Vagina (tissue), 2 donors: ENCODE measurements at regions of chr17 and their contacts with region 1.

Region 1: DNA sequence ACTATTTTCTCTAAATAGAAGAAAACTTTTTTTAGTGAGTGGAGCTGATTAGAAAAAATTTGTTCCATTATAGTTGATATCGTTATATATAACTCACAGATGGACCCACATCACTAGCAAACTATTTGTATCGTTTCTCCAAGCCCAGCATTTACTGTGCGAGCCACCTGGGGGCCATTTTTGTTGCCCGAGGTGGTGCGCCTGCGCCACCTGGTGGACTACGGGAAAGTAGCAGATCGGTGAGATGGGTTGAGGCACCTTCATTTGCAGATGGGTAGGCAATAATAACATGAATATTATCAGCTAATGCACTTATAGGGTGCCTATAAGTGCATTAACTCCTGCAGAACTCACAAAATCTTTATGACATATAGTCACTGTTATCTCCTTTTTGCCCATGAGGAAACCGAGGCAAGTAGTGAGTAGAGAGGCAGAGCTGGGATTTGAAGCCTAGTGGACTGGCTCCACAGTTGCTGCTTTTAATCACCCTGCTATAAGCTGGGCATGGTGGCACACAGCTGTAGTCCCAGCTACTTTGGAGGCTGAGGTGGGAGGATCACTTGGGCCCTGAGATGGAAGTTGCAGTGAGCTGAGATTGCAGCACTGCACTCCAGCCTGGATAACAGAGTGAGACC is 23.2 kb upstream of the NTN1 start:
- DNase-seq: no peak
- H3K4me3 ChIP-seq: no peak overlapping the region
- H3K27ac ChIP-seq: no peak overlapping the region
- H3K4me1 ChIP-seq: peaks cover 9% of the 10 kb centered on the region
- H3K27me3 ChIP-seq: no peaks in the 10 kb centered on the region
- CTCF ChIP-seq: peak in 2 of 3 experiments; percentile 58 to 64
- POLR2A ChIP-seq: no peak

Region 2: DNA sequence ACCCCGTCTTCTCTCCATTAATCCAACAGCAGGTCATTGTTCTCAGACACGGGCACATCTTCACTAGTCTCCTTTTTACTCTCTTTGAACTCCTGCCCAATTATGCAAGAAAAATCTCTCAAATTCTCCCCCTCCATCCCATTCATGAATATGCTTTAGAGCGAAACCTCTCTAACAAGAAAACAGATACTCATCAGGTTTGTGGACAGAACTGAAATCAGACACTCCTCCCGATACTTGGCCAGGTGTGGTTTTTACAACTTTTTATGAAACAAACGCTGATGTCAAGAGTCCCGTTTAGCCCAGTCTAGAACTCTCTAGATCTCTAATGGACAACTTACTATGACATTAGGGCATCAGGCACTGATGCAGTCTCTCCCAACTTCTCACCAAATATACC is 73.5 kb before region 1 on chr17:
- intact Hi-C with region 1: no loop called
- DNase-seq: no peak
- H3K4me3 ChIP-seq: no peak overlapping the region
- H3K27ac ChIP-seq: no peak overlapping the region
- H3K4me1 ChIP-seq: no peaks in the 10 kb centered on the region
- H3K27me3 ChIP-seq: no peaks in the 10 kb centered on the region
- CTCF ChIP-seq: no peak
- POLR2A ChIP-seq: no peak

Region 3: DNA sequence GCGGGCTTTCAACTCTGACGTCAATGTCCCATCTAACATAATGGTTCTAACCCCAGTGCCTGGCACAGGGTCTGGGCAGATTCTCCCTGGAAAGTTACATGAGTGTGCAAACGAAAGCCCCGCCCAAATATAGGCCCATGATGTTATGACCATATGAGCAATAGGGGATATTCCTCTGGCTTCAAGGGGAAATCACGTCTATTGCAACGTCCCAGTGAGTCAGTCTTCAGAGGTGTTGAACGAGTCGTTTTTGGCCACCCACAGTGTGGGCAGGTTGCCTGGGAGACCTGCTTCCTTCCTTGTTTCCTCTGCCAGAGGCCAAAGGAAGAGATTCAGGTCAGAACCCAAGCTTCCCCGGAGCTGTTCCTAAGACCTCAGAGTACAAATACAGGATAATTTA is 62.9 kb before region 1 on chr17:
- intact Hi-C with region 1: no loop called
- DNase-seq: no peak
- H3K4me3 ChIP-seq: no peak overlapping the region
- H3K27ac ChIP-seq: no peak overlapping the region
- H3K4me1 ChIP-seq: no peaks in the 10 kb centered on the region
- H3K27me3 ChIP-seq: no peaks in the 10 kb centered on the region
- CTCF ChIP-seq: no peak
- POLR2A ChIP-seq: no peak

Region 4: GRCh38 chr17:9177212-9177611 is 179.1 kb after region 1 on chr17:
- intact Hi-C with region 1: no loop called
- DNase-seq: no peak
- H3K4me3 ChIP-seq: no peak overlapping the region
- H3K27ac ChIP-seq: no peak overlapping the region
- H3K4me1 ChIP-seq: peaks cover 12% of the 10 kb centered on the region
- H3K27me3 ChIP-seq: no peaks in the 10 kb centered on the region
- CTCF ChIP-seq: no peak
- POLR2A ChIP-seq: no peak

Region 5: DNA sequence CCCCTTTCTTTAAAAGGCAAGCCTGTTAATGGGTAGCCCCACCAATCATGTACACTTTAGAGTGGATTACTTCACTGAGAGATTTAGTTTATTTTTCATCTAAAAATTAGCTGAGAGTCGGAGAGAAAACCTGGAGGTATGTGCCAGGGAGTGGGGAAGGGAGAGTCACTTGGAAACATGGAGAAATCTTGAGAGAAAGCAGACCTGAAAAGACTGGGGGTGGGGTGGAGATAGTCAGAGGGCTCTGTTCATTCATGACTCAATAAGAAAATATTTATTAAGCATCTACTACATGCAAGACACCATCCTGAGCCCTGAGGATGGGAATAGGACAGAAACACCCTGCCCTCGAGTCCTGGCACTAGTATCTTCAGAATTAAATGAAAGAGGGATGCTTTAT is 934.4 kb after region 1 on chr17:
- intact Hi-C with region 1: loop called (anchors 5 kb)
- DNase-seq: no peak
- H3K4me3 ChIP-seq: no peak overlapping the region
- H3K27ac ChIP-seq: no peak overlapping the region
- H3K4me1 ChIP-seq: peaks cover 29% of the 10 kb centered on the region
- H3K27me3 ChIP-seq: no peaks in the 10 kb centered on the region
- CTCF ChIP-seq: no peak
- POLR2A ChIP-seq: no peak